ENCODE measurements at regions of chr15 and their contacts with region 1.

Region 1: DNA sequence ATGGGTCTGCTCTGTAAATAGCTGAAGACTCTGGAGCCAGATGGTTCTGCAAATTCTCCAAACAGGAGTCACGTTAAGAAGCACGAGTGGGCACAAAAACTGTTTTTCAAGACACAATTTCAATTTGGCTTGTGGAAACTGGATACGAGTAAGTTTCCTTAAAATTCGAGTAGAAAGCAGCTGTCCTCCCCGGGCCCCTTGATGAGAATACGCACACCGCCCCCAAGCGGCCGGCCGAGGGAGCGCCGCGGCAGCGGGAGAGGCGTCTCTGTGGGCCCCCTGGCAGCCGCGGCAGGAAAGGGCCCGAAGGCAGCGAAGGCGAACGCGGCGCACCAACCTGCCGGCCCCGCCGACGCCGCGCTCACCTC is 778 bp upstream of the THBS1 start:
- DNase-seq: peak; percentile 92
- H3K4me3 Mint-ChIP-seq: peak overlapping the region; percentile 44
- H3K27ac Mint-ChIP-seq: no peak overlapping the region
- H3K4me1 Mint-ChIP-seq: peaks cover 9% of the 10 kb centered on the region
- H3K27me3 Mint-ChIP-seq: peaks cover 50% of the 10 kb centered on the region

Region 2: GRCh38 chr15:38817427-38818156 is 762.5 kb before region 1 on chr15:
- CTCF ChIA-PET with region 1: interaction called, 3 read pairs
- intact Hi-C with region 1: loop called (anchors 1 kb)
- DNase-seq: peak; percentile 90
- H3K4me3 Mint-ChIP-seq: no peak overlapping the region
- H3K27ac Mint-ChIP-seq: no peak overlapping the region
- H3K4me1 Mint-ChIP-seq: peaks cover 8% of the 10 kb centered on the region
- H3K27me3 Mint-ChIP-seq: peaks cover 2% of the 10 kb centered on the region

Region 3: DNA sequence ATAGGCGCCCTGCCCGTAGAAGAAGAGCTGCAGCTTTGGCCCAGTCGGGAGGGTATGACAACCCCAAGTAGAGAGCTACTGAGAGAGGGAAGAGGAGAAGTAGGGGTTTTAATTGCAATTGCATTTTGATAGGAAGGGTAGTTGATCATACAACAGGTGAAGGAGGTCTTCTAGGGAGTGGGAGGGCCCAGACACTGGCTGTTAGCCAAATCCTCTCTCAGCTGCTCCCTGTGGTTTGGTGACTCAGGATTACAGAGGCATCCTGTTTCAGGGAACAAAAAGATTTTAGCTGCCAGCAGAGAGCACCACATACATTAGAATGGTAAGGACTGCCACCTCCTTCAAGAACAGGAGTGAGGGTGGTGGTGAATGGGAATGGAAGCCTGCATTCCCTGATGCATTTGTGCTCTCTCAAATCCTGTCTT is 408.1 kb before region 1 on chr15:
- CTCF ChIA-PET with region 1: no interaction called
- intact Hi-C with region 1: loop called (anchors 1 kb)
- DNase-seq: peak; percentile 68
- H3K4me3 Mint-ChIP-seq: no peak overlapping the region
- H3K27ac Mint-ChIP-seq: no peak overlapping the region
- H3K4me1 Mint-ChIP-seq: no peaks in the 10 kb centered on the region
- H3K27me3 Mint-ChIP-seq: peaks cover 13% of the 10 kb centered on the region

Region 4: GRCh38 chr15:39629371-39629770 is 49.3 kb after region 1 on chr15:
- CTCF ChIA-PET with region 1: no interaction called
- intact Hi-C with region 1: loop called (anchors 2 kb)
- DNase-seq: peak; percentile 82
- H3K4me3 Mint-ChIP-seq: no peak overlapping the region
- H3K27ac Mint-ChIP-seq: peak overlapping the region; percentile 14
- H3K4me1 Mint-ChIP-seq: peaks cover 49% of the 10 kb centered on the region
- H3K27me3 Mint-ChIP-seq: no peaks in the 10 kb centered on the region

Region 5: GRCh38 chr15:39851500-39852092 is 271.5 kb after region 1 on chr15:
- CTCF ChIA-PET with region 1: no interaction called
- intact Hi-C with region 1: no loop called
- DNase-seq: no peak
- H3K4me3 Mint-ChIP-seq: no peak overlapping the region
- H3K27ac Mint-ChIP-seq: no peak overlapping the region
- H3K4me1 Mint-ChIP-seq: no peaks in the 10 kb centered on the region
- H3K27me3 Mint-ChIP-seq: peaks cover 5% of the 10 kb centered on the region